Naive thymus-derived CD4-positive, alpha-beta T cell (primary cell): ENCODE measurements at regions of chr5 and their contacts with region 1.

Region 1: GRCh38 chr5:142128675-142129208 is 20.2 kb downstream of the NDFIP1 start:
- DNase-seq: peak in 2 of 9 donors; percentile 46 to 50
- ATAC-seq: peak; percentile 82
- H3K4me3 ChIP-seq: no peak overlapping the region
- H3K4me3 Mint-ChIP-seq: peak overlapping the region; percentile 33 to 78 (median 68)
- H3K27ac ChIP-seq: no peak overlapping the region
- H3K27ac Mint-ChIP-seq: peak overlapping the region in 8 of 9 donors; percentile 51 to 78 (median 67)
- H3K4me1 ChIP-seq: peaks cover 27 to 62% of the 10 kb centered on the region in 2 donors
- H3K4me1 Mint-ChIP-seq: peaks cover 0 to 77% (median 58%) of the 10 kb centered on the region in 7 donors
- H3K27me3 ChIP-seq: no peaks in the 10 kb centered on the region
- H3K27me3 Mint-ChIP-seq: no peaks in the 10 kb centered on the region

Region 2: DNA sequence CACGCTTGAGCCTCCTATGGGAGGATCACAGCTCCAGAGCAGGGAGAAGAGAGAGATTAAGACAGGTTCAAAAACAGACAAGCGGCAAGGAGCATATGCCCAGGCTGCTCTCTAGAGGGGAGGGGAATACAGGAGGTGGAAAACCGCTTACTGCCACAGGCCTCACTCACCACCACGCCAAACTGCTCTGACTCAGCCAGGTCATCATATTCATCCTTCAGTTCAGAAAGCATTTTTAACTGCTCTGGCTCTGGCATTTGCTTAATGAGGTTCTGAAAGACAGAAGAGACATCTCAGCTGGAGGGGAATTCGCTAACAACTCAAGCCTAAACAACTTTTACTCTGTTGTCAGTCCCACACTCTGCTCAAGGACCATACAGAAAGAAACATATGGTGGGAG is 599.7 kb before region 1 on chr5:
- CTCF ChIA-PET with region 1: no interaction called
- POLR2A ChIA-PET with region 1: no interaction called
- intact Hi-C with region 1: no loop called
- DNase-seq: no peak
- ATAC-seq: no peak
- H3K4me3 ChIP-seq: no peak overlapping the region
- H3K4me3 Mint-ChIP-seq: no peak overlapping the region
- H3K27ac ChIP-seq: no peak overlapping the region
- H3K27ac Mint-ChIP-seq: peak overlapping the region in 7 of 9 donors; percentile 2 to 74 (median 48)
- H3K4me1 ChIP-seq: no peaks in the 10 kb centered on the region
- H3K4me1 Mint-ChIP-seq: peaks cover 5 to 22% (median 6%) of the 10 kb centered on the region in 7 donors
- H3K27me3 ChIP-seq: no peaks in the 10 kb centered on the region
- H3K27me3 Mint-ChIP-seq: no peaks in the 10 kb centered on the region

Region 3: GRCh38 chr5:141636413-141637122 is 492.2 kb before region 1 on chr5 and contains the starts of genes HDAC3 and RELL2:
- CTCF ChIA-PET with region 1: no interaction called
- POLR2A ChIA-PET with region 1: no interaction called
- intact Hi-C with region 1: no loop called
- DNase-seq: peak; percentile 86 to 99 (median 94)
- ATAC-seq: peak; percentile 98
- H3K4me3 ChIP-seq: peak within 1 kb of the TSS; percentile 81
- H3K4me3 Mint-ChIP-seq: peak within 1 kb of the TSS; percentile 89 to 98 (median 92)
- H3K27ac ChIP-seq: peak within 1 kb of the TSS; percentile 88
- H3K27ac Mint-ChIP-seq: peak within 1 kb of the TSS; percentile 72 to 95 (median 92)
- H3K4me1 ChIP-seq: peaks cover 23 to 24% of the 10 kb centered on the region in 2 donors
- H3K4me1 Mint-ChIP-seq: peaks cover 35 to 56% (median 46%) of the 10 kb centered on the region in 7 donors
- H3K27me3 ChIP-seq: no peaks in the 10 kb centered on the region
- H3K27me3 Mint-ChIP-seq: no peaks in the 10 kb centered on the region
- total RNA-seq, gene HDAC3: 70.0 to 92.8 (median 79.0) TPM
- total RNA-seq, gene RELL2: 14.3 to 21.7 (median 17.5) TPM

Region 4: GRCh38 chr5:142053426-142054151 is 75.2 kb before region 1 on chr5:
- CTCF ChIA-PET with region 1: no interaction called
- POLR2A ChIA-PET with region 1: no interaction called
- intact Hi-C with region 1: no loop called
- DNase-seq: no peak
- ATAC-seq: peak; percentile 83
- H3K4me3 ChIP-seq: no peak overlapping the region
- H3K4me3 Mint-ChIP-seq: peak overlapping the region in 1 of 10 donors; percentile 4
- H3K27ac ChIP-seq: no peak overlapping the region
- H3K27ac Mint-ChIP-seq: peak overlapping the region in 4 of 9 donors; percentile 16 to 73 (median 47)
- H3K4me1 ChIP-seq: no peaks in the 10 kb centered on the region
- H3K4me1 Mint-ChIP-seq: peaks cover 6 to 18% (median 13%) of the 10 kb centered on the region in 7 donors
- H3K27me3 ChIP-seq: no peaks in the 10 kb centered on the region
- H3K27me3 Mint-ChIP-seq: no peaks in the 10 kb centered on the region

Region 5: DNA sequence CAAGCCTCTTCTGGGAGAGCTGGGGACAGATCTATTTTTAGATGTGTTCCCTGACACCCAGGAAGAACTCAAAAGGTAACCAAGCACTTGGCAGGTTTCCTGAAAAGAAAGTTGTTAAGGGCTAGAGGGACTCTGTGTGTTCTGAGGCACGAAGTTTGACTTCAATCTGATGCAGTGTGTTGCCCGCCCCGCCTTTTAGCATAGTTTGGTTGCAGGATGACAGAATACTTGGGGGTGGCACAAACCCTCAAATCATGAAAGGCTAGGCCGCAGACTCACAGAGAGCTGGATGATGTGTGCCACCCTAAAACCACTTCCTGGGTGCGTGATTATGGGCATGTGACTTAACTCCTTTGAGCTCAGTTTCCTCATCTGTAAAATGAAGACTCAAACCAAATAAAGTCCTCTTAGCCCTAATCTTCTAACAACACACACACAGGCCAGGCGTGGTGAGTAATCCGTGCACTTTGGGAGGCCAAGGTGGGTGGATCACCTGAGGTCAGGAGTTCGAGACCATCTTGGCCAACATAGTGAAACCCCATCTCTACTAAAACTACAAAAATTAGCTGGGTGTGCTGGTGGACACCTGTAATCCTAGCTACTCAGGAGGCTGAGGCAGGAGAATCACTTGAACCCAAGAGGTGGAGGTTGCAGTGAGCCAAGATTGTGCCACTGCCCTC is 33.0 kb before region 1 on chr5:
- CTCF ChIA-PET with region 1: no interaction called
- POLR2A ChIA-PET with region 1: no interaction called
- intact Hi-C with region 1: no loop called
- DNase-seq: peak; percentile 33 to 96 (median 92)
- ATAC-seq: peak; percentile 97
- H3K4me3 ChIP-seq: peak overlapping the region; percentile 3
- H3K4me3 Mint-ChIP-seq: peak overlapping the region; percentile 49 to 85 (median 70)
- H3K27ac ChIP-seq: peak overlapping the region; percentile 88
- H3K27ac Mint-ChIP-seq: peak overlapping the region; percentile 79 to 100 (median 96)
- H3K4me1 ChIP-seq: peaks cover 22 to 66% of the 10 kb centered on the region in 2 donors
- H3K4me1 Mint-ChIP-seq: peaks cover 25 to 97% (median 80%) of the 10 kb centered on the region in 7 donors
- H3K27me3 ChIP-seq: no peaks in the 10 kb centered on the region
- H3K27me3 Mint-ChIP-seq: no peaks in the 10 kb centered on the region

Region 6: DNA sequence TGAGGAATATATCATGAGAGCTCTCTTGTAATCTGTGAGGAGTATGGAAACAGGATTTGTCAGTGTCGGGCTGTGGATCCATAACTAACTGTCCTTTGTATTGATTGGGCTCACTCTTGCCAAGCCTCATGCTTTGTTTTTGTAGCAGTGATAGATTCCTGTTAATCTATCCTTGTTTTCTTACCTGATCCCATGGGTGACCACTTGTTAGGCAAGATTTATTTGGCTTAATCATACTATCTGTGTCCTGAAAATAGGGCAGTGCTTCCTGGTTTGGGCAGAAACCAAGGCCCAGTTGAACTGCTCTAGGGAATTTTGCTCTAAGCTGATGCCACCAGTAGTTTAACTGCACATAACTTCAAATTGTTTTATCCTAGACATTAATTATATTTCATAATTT is 14.1 kb before region 1 on chr5:
- CTCF ChIA-PET with region 1: interaction called, 3 read pairs
- POLR2A ChIA-PET with region 1: interaction called, 19 read pairs
- intact Hi-C with region 1: loop called (anchors 1 kb)
- DNase-seq: no peak
- ATAC-seq: no peak
- H3K4me3 ChIP-seq: no peak overlapping the region
- H3K4me3 Mint-ChIP-seq: peak overlapping the region in 7 of 10 donors; percentile 29 to 99 (median 53)
- H3K27ac ChIP-seq: no peak overlapping the region
- H3K27ac Mint-ChIP-seq: peak overlapping the region in 3 of 9 donors; percentile 9 to 48 (median 21)
- H3K4me1 ChIP-seq: peaks cover 26 to 59% of the 10 kb centered on the region in 2 donors
- H3K4me1 Mint-ChIP-seq: peaks cover 61 to 92% (median 81%) of the 10 kb centered on the region in 7 donors
- H3K27me3 ChIP-seq: no peaks in the 10 kb centered on the region
- H3K27me3 Mint-ChIP-seq: no peaks in the 10 kb centered on the region